AG04450 (cell line): ENCODE measurements at regions of chr15 and their contacts with region 1.

Region 1: GRCh38 chr15:83559310-83559966 is 94.5 kb upstream of the ADAMTSL3 start:
- DNase-seq: peak; percentile 30
- H3K4me3 ChIP-seq: no peak overlapping the region
- H3K27ac ChIP-seq: no peak overlapping the region
- H3K27me3 ChIP-seq: no peaks in the 10 kb centered on the region
- CTCF ChIP-seq: peak; percentile 91

Region 2: DNA sequence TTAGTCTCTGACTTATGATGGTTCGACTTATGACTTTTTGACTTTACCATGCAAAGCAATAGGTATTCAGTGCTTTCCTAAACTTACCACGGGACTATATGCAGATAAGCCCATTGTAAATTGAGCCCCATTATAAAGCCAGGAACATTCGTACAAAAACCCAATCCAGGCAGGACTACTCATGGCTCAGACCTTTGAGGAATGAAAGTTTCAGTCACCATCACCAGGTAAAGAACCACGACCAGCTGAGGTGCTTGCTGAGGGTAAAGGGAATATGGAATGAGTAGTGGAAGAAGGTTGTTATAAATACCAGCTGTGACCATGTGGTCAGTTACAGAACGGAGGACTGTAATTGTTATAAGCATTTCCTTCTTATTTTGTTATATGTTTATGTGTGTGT is 220.0 kb before region 1 on chr15:
- CTCF ChIA-PET with region 1: no interaction called
- POLR2A ChIA-PET with region 1: no interaction called
- DNase-seq: no peak
- H3K4me3 ChIP-seq: no peak overlapping the region
- H3K27ac ChIP-seq: no peak overlapping the region
- H3K27me3 ChIP-seq: no peaks in the 10 kb centered on the region
- CTCF ChIP-seq: no peak

Region 3: DNA sequence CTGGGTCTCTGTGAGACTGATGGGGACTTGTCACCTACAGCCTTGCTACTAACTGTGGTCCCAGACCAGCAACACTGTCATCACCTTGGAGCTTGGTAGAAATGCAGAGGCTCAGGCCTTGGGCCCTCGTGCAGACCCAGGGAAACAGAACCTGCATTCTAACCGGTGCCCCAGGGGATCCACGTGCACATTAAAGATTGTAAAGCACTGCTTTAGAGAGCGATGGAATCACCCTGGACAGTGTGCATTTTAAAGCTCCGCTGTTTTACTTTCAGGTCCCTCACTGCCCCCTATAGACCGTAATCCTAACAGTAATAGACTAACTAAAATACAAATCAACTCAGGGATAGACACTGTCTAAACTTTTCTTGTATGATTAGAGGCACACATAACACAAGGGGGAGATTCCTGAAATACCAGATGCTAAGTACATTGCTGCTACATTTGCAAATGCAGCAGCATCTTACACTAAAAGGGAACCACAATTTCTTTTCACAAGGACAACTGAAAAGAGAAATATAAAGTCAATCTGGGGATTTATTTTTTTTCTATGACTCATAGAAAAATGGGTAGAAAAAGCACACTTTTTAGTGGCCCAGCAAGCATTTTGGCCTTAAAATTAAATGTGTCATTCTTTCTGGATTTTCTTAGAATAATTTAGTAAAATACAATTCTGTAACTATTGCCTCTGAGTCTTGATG is 122.8 kb before region 1 on chr15:
- CTCF ChIA-PET with region 1: interaction called, 95 read pairs
- POLR2A ChIA-PET with region 1: no interaction called
- DNase-seq: no peak
- H3K4me3 ChIP-seq: no peak overlapping the region
- H3K27ac ChIP-seq: no peak overlapping the region
- H3K27me3 ChIP-seq: no peaks in the 10 kb centered on the region
- CTCF ChIP-seq: peak; percentile 67

Region 4: GRCh38 chr15:83571820-83572707 is 12.6 kb after region 1 on chr15:
- CTCF ChIA-PET with region 1: interaction called, 38 read pairs
- POLR2A ChIA-PET with region 1: no interaction called
- DNase-seq: no peak
- H3K4me3 ChIP-seq: no peak overlapping the region
- H3K27ac ChIP-seq: no peak overlapping the region
- H3K27me3 ChIP-seq: no peaks in the 10 kb centered on the region
- CTCF ChIP-seq: peak; percentile 70